Heart left ventricle (tissue), 16 donors: ENCODE measurements at regions of chr16 and their contacts with region 1.

Region 1: GRCh38 chr16:25006469-25007055 is 8.6 kb downstream of the ARHGAP17 start:
- DNase-seq: no peak
- ATAC-seq: peak in 3 of 4 donors; percentile 56 to 62 (median 62)
- H3K4me3 ChIP-seq: no peak overlapping the region
- H3K27ac ChIP-seq: peak overlapping the region in 10 of 12 donors; percentile 8 to 68 (median 44)
- H3K4me1 ChIP-seq: peaks cover 6 to 89% (median 60%) of the 10 kb centered on the region in 12 donors
- H3K27me3 ChIP-seq: no peaks in the 10 kb centered on the region
- CTCF ChIP-seq: no peak
- POLR2A ChIP-seq: no peak

Region 2: DNA sequence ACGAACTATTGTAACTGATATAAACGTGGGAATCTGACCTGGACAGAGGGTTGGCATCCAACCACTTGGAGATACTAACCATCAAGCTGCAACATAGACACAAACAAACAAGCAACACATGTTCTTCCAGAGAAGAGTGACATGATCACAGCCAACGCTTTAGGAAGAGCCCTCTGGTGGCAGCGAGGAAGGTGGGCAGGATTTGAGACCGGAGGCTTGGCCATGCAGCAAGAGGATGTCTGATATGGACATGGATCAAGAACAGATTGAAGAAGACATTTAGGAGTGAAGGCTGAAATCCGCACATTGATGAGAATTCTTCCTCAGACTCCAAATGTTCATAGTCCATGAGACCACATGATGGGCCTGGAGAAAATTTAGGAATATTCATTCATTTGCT is 317.4 kb before region 1 on chr16:
- intact Hi-C with region 1: no loop called
- DNase-seq: no peak
- ATAC-seq: peak; percentile 23 to 65 (median 58)
- H3K4me3 ChIP-seq: no peak overlapping the region
- H3K27ac ChIP-seq: no peak overlapping the region
- H3K4me1 ChIP-seq: peaks cover 0 to 15% (median 2%) of the 10 kb centered on the region in 12 donors
- H3K27me3 ChIP-seq: no peaks in the 10 kb centered on the region
- CTCF ChIP-seq: peak; percentile 2 to 66 (median 50)
- POLR2A ChIP-seq: no peak

Region 3: GRCh38 chr16:24975428-24975889 is 31.1 kb before region 1 on chr16:
- intact Hi-C with region 1: loop called in 8 of 10 experiments (anchors 5 kb)
- DNase-seq: no peak
- ATAC-seq: peak in 1 of 4 donors; percentile 51
- H3K4me3 ChIP-seq: no peak overlapping the region
- H3K27ac ChIP-seq: peak overlapping the region in 4 of 12 donors; percentile 24 to 50 (median 37)
- H3K4me1 ChIP-seq: peaks cover 6 to 89% (median 63%) of the 10 kb centered on the region in 12 donors
- H3K27me3 ChIP-seq: no peaks in the 10 kb centered on the region
- CTCF ChIP-seq: no peak
- POLR2A ChIP-seq: no peak